ENCODE measurements at regions of chr1 and their contacts with region 1.

Region 1: DNA sequence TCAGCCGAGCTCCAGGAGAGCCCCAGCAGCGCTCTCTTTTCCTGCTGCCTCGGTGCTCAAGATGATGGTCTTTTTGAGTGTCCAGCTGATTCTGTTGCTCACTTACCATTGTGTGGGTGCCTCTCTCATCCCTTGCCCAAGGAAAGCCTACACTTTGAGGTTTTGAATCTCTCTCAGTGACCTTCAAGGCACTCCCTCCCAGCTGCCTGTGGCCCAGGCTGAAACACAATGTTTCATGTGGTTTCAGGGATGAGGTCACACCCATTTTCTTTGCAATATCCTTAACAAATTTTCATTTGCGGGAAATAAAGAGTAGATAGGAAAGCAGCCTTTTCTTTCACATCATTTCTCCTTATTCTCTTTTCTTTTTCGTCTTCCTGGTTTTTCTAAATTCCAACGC is 12.6 kb upstream of the MRPS14 start:
- DNase-seq: no peak
- ATAC-seq: no peak
- H3K4me3 ChIP-seq: no peak overlapping the region
- H3K4me3 Mint-ChIP-seq: no peak overlapping the region
- H3K27ac ChIP-seq: no peak overlapping the region
- H3K27ac Mint-ChIP-seq: no peak overlapping the region
- H3K4me1 ChIP-seq: no peaks in the 10 kb centered on the region
- H3K4me1 Mint-ChIP-seq: peaks cover 0 to 2% (median 0%) of the 10 kb centered on the region in 7 donors
- H3K27me3 ChIP-seq: no peaks in the 10 kb centered on the region
- H3K27me3 Mint-ChIP-seq: peaks cover 0 to 20% (median 0%) of the 10 kb centered on the region in 5 donors

Region 2: GRCh38 chr1:175129182-175129581 is 93.3 kb after region 1 on chr1:
- CTCF ChIA-PET with region 1: interaction called, 11 read pairs
- POLR2A ChIA-PET with region 1: no interaction called
- intact Hi-C with region 1: no loop called
- DNase-seq: no peak
- ATAC-seq: no peak
- H3K4me3 ChIP-seq: no peak overlapping the region
- H3K4me3 Mint-ChIP-seq: no peak overlapping the region
- H3K27ac ChIP-seq: no peak overlapping the region
- H3K27ac Mint-ChIP-seq: no peak overlapping the region
- H3K4me1 ChIP-seq: no peaks in the 10 kb centered on the region
- H3K4me1 Mint-ChIP-seq: peaks cover 0 to 3% (median 0%) of the 10 kb centered on the region in 7 donors
- H3K27me3 ChIP-seq: no peaks in the 10 kb centered on the region
- H3K27me3 Mint-ChIP-seq: peaks cover 0 to 5% (median under 1%) of the 10 kb centered on the region in 5 donors

Region 3: DNA sequence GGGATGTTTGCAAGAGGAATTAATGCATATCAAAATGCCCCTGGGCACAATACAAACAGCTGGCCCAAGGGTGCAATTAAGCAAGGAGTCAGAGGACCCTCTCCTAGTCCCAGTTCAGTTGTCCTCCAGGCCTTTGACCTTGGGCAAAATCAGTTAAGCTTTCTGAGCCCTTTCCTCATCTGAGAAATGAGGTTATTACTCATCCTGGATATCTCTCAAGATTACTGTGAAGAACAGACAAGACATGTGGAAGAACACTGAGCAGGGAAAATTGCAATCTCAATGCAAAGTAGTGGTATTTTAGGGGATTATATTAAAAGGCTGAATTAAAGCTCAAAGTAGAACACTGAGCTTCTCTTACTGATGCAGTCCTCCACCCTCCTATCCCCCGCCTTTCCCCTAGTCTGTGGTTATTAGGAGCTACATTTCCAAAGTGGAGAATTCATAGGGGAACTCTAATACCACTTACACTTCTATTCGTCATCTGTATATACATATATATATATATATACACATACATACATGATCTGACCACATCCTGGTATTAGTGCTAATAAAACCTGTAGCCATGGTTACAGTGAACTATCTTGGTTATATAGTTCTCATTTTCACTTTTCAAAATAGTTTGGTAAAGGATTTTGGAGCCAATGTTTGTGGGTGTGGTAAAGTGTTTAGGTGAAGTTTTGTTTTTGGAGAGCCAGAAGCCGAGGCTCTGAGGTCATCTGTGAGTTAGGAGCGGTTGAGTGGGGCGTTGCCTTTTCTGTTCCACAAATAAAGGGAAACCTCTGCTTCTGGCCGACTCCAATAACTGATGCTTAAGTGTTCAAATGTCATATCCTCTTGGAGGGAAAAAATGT is 138.7 kb after region 1 on chr1:
- CTCF ChIA-PET with region 1: no interaction called
- POLR2A ChIA-PET with region 1: no interaction called
- intact Hi-C with region 1: no loop called
- DNase-seq: no peak
- ATAC-seq: no peak
- H3K4me3 ChIP-seq: no peak overlapping the region
- H3K4me3 Mint-ChIP-seq: no peak overlapping the region
- H3K27ac ChIP-seq: no peak overlapping the region
- H3K27ac Mint-ChIP-seq: peak overlapping the region in 1 of 9 donors; percentile 19
- H3K4me1 ChIP-seq: peaks cover 0 to 15% of the 10 kb centered on the region in 2 donors
- H3K4me1 Mint-ChIP-seq: peaks cover 32 to 85% (median 77%) of the 10 kb centered on the region in 7 donors
- H3K27me3 ChIP-seq: no peaks in the 10 kb centered on the region
- H3K27me3 Mint-ChIP-seq: no peaks in the 10 kb centered on the region